Transverse colon (tissue), 4 donors: ENCODE measurements at regions of chr1 and their contacts with region 1.

Region 1: GRCh38 chr1:165597883-165598675 is 33.0 kb upstream of the MGST3 start:
- DNase-seq: peak; percentile 97
- H3K4me3 ChIP-seq: peak overlapping the region; percentile 49 to 69 (median 53)
- H3K27ac ChIP-seq: peak overlapping the region; percentile 80 to 82 (median 81)
- H3K4me1 ChIP-seq: peaks cover 0 to 18% (median 8%) of the 10 kb centered on the region in 4 donors
- H3K27me3 ChIP-seq: peaks cover 35% of the 10 kb centered on the region
- CTCF ChIP-seq: no peak
- EP300 ChIP-seq: no peak
- POLR2A ChIP-seq: no peak

Region 2: DNA sequence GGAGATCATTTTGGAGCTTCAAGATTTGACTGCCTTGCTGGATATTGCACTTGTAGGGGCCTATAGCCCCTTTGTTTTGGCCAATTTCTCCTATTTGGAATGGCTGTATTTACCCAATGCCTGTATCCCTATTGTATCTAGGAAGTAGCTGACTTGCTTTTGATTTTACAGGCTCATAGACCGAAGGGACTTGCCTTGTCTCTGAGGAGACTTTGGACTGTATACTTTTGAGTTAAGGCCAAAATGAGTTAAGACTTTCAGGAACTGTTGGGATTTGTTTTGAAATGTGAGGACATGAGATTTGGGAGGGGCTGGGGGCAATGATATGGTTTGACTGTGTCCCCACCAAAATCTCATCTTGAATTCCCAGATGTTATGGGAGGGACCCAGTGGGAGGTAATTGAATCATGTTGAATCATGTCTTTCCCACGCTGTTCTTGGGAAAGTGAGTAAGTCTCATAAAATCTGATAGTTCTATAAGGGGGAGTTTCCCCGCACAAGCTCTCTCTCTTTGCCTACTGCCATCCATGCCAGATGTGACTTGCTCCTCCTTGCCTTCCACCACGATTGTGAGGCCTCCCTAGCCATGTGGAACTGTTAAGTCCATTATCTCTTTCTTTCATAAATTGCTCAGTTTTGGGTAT is 517.7 kb before region 1 on chr1:
- in situ Hi-C with region 1: no loop called
- intact Hi-C with region 1: no loop called
- DNase-seq: no peak
- H3K4me3 ChIP-seq: no peak overlapping the region
- H3K27ac ChIP-seq: no peak overlapping the region
- H3K4me1 ChIP-seq: no peaks in the 10 kb centered on the region
- H3K27me3 ChIP-seq: no peaks in the 10 kb centered on the region
- CTCF ChIP-seq: no peak
- EP300 ChIP-seq: no peak
- POLR2A ChIP-seq: no peak

Region 3: GRCh38 chr1:165257969-165258459 is 340.1 kb before region 1 on chr1:
- in situ Hi-C with region 1: loop called in 1 of 4 experiments (anchors 25 kb)
- intact Hi-C with region 1: no loop called
- DNase-seq: peak; percentile 82
- H3K4me3 ChIP-seq: no peak overlapping the region
- H3K27ac ChIP-seq: no peak overlapping the region
- H3K4me1 ChIP-seq: no peaks in the 10 kb centered on the region
- H3K27me3 ChIP-seq: no peaks in the 10 kb centered on the region
- CTCF ChIP-seq: peak; percentile 60 to 81 (median 70)
- EP300 ChIP-seq: no peak
- POLR2A ChIP-seq: no peak

Region 4: GRCh38 chr1:165288350-165289148 is 309.5 kb before region 1 on chr1:
- in situ Hi-C with region 1: no loop called
- intact Hi-C with region 1: no loop called
- DNase-seq: peak; percentile 38
- H3K4me3 ChIP-seq: no peak overlapping the region
- H3K27ac ChIP-seq: peak overlapping the region in 3 of 4 donors; percentile 2 to 41 (median 31)
- H3K4me1 ChIP-seq: peaks cover 0 to 23% (median 11%) of the 10 kb centered on the region in 4 donors
- H3K27me3 ChIP-seq: no peaks in the 10 kb centered on the region
- CTCF ChIP-seq: no peak
- EP300 ChIP-seq: no peak
- POLR2A ChIP-seq: no peak

Region 5: GRCh38 chr1:165392634-165393571 is 205.2 kb before region 1 on chr1:
- in situ Hi-C with region 1: loop called (anchors 5 to 10 kb)
- intact Hi-C with region 1: loop called (anchors 2 kb)
- DNase-seq: peak; percentile 85
- H3K4me3 ChIP-seq: peak overlapping the region in 1 of 4 donors; percentile 32
- H3K27ac ChIP-seq: no peak overlapping the region
- H3K4me1 ChIP-seq: peaks cover 0 to 9% (median 2%) of the 10 kb centered on the region in 4 donors
- H3K27me3 ChIP-seq: peaks cover 33% of the 10 kb centered on the region
- CTCF ChIP-seq: peak; percentile 85 to 95 (median 91)
- EP300 ChIP-seq: no peak
- POLR2A ChIP-seq: no peak

Region 6: DNA sequence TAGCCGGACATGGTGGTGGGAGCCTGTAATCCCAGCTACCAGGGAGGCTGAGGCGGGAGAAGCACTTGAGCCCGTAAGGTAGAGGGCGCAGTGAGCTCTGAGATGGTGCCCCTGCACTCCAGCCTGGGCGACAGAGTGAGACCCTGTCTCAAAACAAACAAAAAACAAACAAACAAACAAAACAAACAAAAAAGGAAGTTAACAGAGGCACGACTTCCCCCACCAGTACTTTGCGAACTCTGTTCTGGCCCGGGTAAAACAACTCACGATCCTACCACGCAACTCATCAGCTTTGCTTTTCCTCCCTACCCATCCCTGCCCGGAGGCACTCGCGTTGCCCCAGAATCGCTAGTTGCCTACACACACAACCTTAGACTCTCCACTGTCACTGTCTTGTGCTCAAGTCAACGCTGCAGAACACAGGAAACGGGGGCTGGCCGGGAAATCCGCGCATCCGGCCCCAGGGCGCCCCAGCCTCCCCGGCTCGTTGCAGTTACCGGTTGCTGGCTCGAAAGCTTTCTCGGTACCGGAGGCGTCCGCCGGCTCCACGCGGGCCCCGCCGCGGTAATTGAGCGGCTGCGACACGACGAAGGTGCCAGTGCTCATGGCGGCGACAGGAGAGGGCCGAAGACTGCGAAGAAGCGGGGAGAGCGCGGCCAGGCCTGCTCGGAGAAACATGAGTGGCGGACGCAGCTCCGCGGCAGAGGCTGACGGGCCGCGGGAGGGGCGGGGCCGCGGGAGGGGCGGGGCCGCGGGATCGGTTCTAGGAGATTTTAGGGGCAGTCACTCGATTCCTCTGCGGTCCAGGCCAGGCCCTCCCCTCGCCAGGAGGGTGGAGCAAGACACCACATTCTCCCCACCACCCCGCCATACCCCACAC is 100.0 kb after region 1 on chr1 and contains the start of gene ALDH9A1:
- in situ Hi-C with region 1: loop called in 1 of 4 experiments (anchors 10 kb)
- intact Hi-C with region 1: no loop called
- DNase-seq: peak; percentile 93
- H3K4me3 ChIP-seq: peak within 1 kb of the TSS; percentile 67 to 69 (median 67)
- H3K27ac ChIP-seq: peak within 1 kb of the TSS; percentile 93 to 96 (median 96)
- H3K4me1 ChIP-seq: peaks cover 13 to 29% (median 20%) of the 10 kb centered on the region in 4 donors
- H3K27me3 ChIP-seq: no peaks in the 10 kb centered on the region
- CTCF ChIP-seq: peak in 4 of 5 experiments; percentile 13 to 48 (median 22)
- EP300 ChIP-seq: no peak
- POLR2A ChIP-seq: peak; percentile 80
- total RNA-seq, gene ALDH9A1: 15.3 to 103 (median 59.5) TPM

Region 7: DNA sequence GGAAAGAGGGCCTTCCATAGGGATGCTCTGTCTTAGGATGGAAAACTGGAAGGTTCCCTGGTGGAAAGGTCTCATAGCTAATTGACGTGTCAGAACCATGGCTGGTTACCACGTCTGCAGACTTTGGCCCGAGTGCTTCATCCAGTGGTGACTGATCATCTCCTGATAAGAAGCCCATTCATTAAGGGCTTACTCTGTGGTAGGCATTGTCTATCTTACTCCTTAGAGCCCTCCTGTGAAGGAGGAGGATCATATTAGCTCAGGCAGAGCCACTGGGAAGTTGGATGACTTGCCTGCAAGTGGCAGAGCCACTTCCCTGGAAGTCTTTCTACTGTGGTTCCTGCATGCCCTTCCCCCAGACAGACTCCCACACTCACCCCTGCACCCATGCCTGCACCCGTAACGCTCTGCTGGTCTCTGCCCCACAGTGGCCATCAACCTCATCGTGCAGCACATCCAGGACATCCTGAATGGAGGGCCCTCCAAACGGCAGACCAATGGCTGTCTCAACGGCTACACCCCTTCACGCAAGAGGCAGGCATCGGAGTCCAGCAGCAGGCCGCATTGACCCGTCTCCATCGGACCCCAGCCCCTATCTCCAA is 309.3 kb after region 1 on chr1:
- in situ Hi-C with region 1: loop called (anchors 5 to 10 kb)
- intact Hi-C with region 1: loop called (anchors 5 kb)
- DNase-seq: no peak
- H3K4me3 ChIP-seq: no peak overlapping the region
- H3K27ac ChIP-seq: no peak overlapping the region
- H3K4me1 ChIP-seq: peaks cover 0 to 27% (median 16%) of the 10 kb centered on the region in 4 donors
- H3K27me3 ChIP-seq: no peaks in the 10 kb centered on the region
- CTCF ChIP-seq: no peak
- EP300 ChIP-seq: no peak
- POLR2A ChIP-seq: no peak

Region 8: DNA sequence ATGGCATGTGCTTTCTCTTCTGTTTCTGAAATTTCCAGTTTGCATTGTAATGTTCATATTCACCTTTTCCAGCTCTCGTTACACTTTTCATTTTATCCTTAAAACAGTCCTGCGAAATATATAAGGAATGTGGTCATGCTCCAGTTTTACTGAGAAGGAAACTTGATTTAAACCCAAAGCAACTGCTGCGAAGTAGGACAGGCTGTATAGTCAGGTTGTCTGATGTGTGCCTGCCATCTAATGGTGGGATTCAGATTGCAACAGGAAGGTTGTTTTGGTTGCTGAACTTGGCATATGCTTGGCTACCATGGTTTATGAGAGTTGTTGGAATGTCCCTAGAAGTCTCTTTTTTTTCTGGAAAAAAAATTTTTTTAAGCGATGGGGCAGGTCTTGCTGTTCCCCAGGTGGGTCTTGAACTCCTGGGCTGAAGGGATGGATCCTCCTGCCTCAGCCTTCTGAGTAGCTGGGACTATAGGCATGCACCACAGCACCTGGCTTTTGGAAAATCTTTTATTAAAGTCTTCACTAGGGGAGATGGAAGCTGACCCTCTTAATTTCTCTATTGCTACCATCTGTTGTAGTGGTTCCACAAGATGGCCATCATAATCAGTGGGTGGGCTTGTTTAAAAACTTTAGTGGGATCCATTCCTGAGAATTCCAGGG is 316.2 kb after region 1 on chr1:
- in situ Hi-C with region 1: loop called (anchors 5 to 10 kb)
- intact Hi-C with region 1: loop called (anchors 5 kb)
- DNase-seq: peak; percentile 78
- H3K4me3 ChIP-seq: no peak overlapping the region
- H3K27ac ChIP-seq: no peak overlapping the region
- H3K4me1 ChIP-seq: peaks cover 0 to 42% (median 19%) of the 10 kb centered on the region in 4 donors
- H3K27me3 ChIP-seq: no peaks in the 10 kb centered on the region
- CTCF ChIP-seq: peak; percentile 78 to 94 (median 86)
- EP300 ChIP-seq: no peak
- POLR2A ChIP-seq: no peak